Transverse colon (tissue), 4 donors: ENCODE measurements at regions of chr7 and their contacts with region 1.

Region 1: DNA sequence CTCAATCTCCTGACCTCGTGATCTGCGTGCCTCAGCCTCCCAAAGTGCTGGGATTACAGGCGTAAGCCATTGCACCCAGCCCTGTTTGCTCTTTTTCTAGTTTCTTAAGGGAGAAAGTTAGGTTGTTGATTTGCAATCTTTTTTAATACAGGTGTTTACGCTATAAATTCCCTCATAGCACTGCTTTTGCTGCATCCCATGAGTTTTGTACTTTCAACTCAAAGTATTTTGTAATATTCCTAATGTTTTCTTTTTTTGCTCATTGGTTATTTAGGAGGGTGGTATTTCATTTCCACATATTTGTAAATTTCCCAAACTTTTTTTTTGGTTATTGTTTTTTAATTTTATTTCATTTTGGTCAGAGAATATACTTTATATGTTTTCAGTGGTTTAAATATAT is 11.6 kb downstream of the TPST1 start:
- DNase-seq: no peak
- H3K4me3 ChIP-seq: no peak overlapping the region
- H3K27ac ChIP-seq: no peak overlapping the region
- H3K4me1 ChIP-seq: no peaks in the 10 kb centered on the region
- H3K27me3 ChIP-seq: no peaks in the 10 kb centered on the region
- CTCF ChIP-seq: no peak
- EP300 ChIP-seq: no peak
- POLR2A ChIP-seq: no peak

Region 2: GRCh38 chr7:66265566-66265965 is 48.9 kb after region 1 on chr7:
- in situ Hi-C with region 1: no loop called
- intact Hi-C with region 1: loop called (anchors 5 kb)
- DNase-seq: no peak
- H3K4me3 ChIP-seq: no peak overlapping the region
- H3K27ac ChIP-seq: no peak overlapping the region
- H3K4me1 ChIP-seq: peaks cover 0 to 9% (median 1%) of the 10 kb centered on the region in 4 donors
- H3K27me3 ChIP-seq: no peaks in the 10 kb centered on the region
- CTCF ChIP-seq: no peak
- EP300 ChIP-seq: no peak
- POLR2A ChIP-seq: no peak